Common myeloid progenitor, CD34-positive (primary cell): ENCODE measurements at regions of chr11 and their contacts with region 1.

Region 1: DNA sequence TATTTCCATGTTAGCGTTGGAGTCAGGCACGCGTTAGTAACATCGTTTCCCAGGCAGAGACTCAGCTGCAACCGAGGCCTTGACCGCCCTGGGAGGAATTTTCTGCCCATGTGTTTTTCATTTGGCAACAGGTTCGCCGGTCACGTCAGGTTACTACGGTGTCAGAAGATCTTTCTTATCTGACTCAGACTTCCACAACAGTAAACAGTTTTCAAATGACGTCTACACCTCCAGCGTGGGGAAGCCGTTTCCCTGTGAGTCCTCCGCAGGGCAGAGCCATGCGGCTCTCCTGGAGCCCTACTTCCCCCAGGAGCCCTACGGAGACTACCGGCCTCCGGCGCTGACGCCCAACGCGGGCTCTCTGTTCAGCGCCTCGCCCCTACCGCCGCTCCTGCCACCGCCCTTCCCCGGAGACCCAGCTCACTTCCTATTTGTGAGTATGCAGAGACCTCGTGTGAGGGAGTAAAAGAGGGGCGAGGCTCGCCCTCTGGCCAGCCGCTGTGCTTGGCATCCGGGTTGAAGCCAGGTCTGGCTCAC is 14.3 kb upstream of the POU2AF3 start:
- DNase-seq: peak in 2 of 3 donors; percentile 6 to 12
- H3K4me3 ChIP-seq: peak overlapping the region in 1 of 7 experiments; percentile 8
- H3K27ac ChIP-seq: no peak overlapping the region
- H3K4me1 ChIP-seq: no peaks in the 10 kb centered on the region
- H3K27me3 ChIP-seq: no peaks in the 10 kb centered on the region

Region 2: DNA sequence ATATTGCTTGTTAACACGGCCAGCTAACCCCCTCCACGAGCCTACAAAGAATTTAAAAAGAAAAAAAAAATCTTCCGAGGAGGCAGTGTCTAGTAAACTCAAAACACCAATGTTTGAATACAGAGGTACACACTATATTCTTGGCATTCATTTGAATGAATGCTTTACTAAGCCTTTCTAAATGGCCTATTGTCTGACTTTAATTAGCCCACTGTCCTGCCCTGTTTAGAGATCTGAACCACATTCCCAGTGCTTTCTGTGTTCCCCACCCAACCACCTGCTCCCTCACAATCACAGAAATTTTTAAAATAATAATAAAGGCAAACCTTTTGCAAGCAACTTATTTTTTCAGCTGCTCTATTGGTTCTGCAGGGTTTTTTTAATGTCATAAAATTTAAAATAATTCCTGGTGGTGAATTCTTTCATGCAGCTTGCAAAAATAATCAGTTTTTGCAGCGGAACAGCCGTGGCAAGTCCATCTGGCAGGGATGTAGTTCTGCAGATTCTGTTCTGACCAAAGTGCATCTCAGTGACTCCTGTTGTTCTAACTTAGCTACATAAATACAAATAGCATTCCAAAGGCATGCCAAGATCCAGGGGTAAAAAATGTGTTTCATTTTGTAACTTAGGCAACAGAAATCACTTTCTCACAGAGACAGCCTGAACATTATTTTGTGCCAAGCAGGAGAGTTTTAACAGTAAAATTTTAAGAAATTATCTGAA is 14.7 kb before region 1 on chr11:
- CTCF ChIA-PET with region 1: interaction called, 10 read pairs
- POLR2A ChIA-PET with region 1: no interaction called
- DNase-seq: no peak
- H3K4me3 ChIP-seq: no peak overlapping the region
- H3K27ac ChIP-seq: no peak overlapping the region
- H3K4me1 ChIP-seq: no peaks in the 10 kb centered on the region
- H3K27me3 ChIP-seq: no peaks in the 10 kb centered on the region

Region 3: DNA sequence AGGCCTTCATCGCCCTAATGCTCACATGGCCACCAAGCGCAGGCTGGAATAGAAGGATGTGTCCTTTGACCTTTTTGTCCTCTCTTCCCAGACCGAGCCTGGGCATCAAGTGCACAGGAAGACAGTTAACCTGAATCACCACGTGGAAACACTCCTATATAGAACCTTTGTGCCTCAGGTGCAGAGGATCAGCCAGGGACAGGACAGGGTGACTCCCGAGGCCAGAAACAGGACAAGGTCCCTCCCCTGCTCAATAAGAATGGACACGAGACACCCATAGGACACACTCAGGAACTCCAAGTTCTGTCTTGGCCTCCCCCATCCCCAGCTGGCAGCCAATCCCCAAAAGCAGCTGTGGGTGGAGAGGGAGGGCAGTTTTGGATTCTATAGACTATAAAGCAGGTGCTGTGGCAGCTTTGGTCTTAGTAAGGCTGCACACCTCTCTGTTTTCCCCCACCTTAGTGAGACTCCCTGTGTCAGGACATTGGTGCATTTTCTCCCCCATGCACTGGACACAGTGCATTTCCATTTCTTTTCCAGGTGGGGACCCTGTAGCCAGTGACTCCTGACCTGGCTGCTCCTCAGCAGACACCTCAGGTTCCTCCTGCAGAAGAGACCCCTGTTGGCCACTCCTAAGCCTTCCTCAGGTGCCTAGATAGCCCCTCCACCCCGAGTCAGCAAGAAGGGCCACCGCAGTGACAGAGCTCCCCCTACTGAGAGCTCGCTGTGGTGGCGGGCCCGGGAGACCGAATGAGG is 138.7 kb after region 1 on chr11:
- CTCF ChIA-PET with region 1: interaction called, 176 read pairs
- POLR2A ChIA-PET with region 1: no interaction called
- DNase-seq: peak; percentile 70 to 76 (median 72)
- H3K4me3 ChIP-seq: no peak overlapping the region
- H3K27ac ChIP-seq: no peak overlapping the region
- H3K4me1 ChIP-seq: peaks cover 0 to 8% (median 6%) of the 10 kb centered on the region in 4 experiments
- H3K27me3 ChIP-seq: peaks cover 0 to 3% (median 0%) of the 10 kb centered on the region in 5 experiments

Region 4: GRCh38 chr11:111429066-111429506 is 145.1 kb after region 1 on chr11:
- CTCF ChIA-PET with region 1: interaction called, 176 read pairs
- POLR2A ChIA-PET with region 1: no interaction called
- DNase-seq: peak; percentile 51 to 62 (median 58)
- H3K4me3 ChIP-seq: no peak overlapping the region
- H3K27ac ChIP-seq: no peak overlapping the region
- H3K4me1 ChIP-seq: peaks cover 0 to 4% (median 0%) of the 10 kb centered on the region in 4 experiments
- H3K27me3 ChIP-seq: peaks cover 0 to 3% (median 0%) of the 10 kb centered on the region in 5 experiments

Region 5: DNA sequence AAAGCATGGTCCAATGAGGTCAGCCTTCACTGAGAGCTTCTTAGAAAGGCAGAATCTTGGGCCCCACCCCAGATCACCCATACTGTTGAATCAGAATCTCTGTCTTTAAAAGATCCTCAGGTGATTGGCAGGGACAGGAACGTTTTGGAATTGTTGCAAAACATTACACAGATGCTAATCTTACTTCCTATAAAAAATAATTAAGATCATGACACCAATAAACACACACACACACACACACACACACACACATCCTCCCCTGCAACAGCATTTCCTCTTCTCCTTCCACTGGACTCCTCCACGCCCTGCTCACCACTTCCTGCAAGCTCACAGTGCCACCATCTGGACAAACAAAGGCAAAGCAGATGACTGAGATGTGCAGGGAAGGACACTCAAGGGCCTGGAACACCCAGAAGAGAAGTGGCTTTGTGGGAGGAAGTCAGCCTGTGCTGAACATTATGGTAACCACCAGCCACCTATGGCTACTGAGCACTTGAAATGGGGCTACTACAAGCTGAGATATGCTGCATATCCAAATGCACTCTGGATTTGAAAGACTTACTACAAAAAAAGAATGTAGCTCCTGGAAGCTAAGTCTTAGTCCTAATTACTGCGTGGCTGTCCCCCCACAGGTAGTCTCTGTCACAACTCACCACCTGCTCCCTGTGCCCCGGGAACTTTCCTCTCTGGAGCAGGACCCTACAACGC is 162.5 kb after region 1 on chr11:
- CTCF ChIA-PET with region 1: interaction called, 14 read pairs
- POLR2A ChIA-PET with region 1: no interaction called
- DNase-seq: peak; percentile 98 to 99 (median 99)
- H3K4me3 ChIP-seq: peak overlapping the region in 1 of 7 experiments; percentile 27
- H3K27ac ChIP-seq: no peak overlapping the region
- H3K4me1 ChIP-seq: peaks cover 4 to 18% (median 8%) of the 10 kb centered on the region in 4 experiments
- H3K27me3 ChIP-seq: no peaks in the 10 kb centered on the region